ENCODE measurements at regions of chr6 and their contacts with region 1.

Region 1: GRCh38 chr6:166419286-166419685 is 36.5 kb upstream of the MPC1 start:
- DNase-seq: no peak
- H3K4me3 ChIP-seq: no peak overlapping the region
- H3K27ac ChIP-seq: no peak overlapping the region
- H3K4me1 ChIP-seq: no peaks in the 10 kb centered on the region
- H3K27me3 ChIP-seq: no peaks in the 10 kb centered on the region
- CTCF ChIP-seq: no peak
- POLR2A ChIP-seq: no peak

Region 2: GRCh38 chr6:165676435-165677068 is 742.7 kb before region 1 on chr6:
- intact Hi-C with region 1: loop called (anchors 10 kb)
- DNase-seq: no peak
- H3K4me3 ChIP-seq: no peak overlapping the region
- H3K27ac ChIP-seq: no peak overlapping the region
- H3K4me1 ChIP-seq: no peaks in the 10 kb centered on the region
- H3K27me3 ChIP-seq: peaks cover 0 to 6% of the 10 kb centered on the region in 2 donors
- CTCF ChIP-seq: no peak
- POLR2A ChIP-seq: no peak

Region 3: GRCh38 chr6:166379800-166380199 is 39.5 kb before region 1 on chr6:
- intact Hi-C with region 1: no loop called
- DNase-seq: no peak
- H3K4me3 ChIP-seq: no peak overlapping the region
- H3K27ac ChIP-seq: no peak overlapping the region
- H3K4me1 ChIP-seq: no peaks in the 10 kb centered on the region
- H3K27me3 ChIP-seq: no peaks in the 10 kb centered on the region
- CTCF ChIP-seq: no peak
- POLR2A ChIP-seq: no peak

Region 4: DNA sequence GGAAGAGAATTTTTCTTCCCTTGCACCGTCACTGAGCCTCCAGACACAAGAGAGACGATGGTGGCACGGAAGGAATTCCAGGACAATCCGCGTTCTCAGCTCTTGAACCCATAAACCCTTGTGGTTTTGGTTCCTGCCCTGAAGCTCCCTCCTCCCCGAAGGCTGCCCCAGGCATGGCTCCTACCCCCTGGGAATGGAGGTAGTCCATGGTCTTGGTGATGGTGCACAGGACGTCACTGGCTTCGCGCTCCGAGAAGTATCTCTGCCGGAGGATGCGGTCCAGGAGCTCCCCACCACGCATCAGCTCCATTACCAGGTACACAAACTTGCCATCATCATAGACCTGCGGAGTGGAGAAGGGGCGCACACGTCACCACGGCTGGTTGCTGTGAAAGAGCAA is 11.0 kb after region 1 on chr6:
- intact Hi-C with region 1: no loop called
- DNase-seq: no peak
- H3K4me3 ChIP-seq: no peak overlapping the region
- H3K27ac ChIP-seq: no peak overlapping the region
- H3K4me1 ChIP-seq: no peaks in the 10 kb centered on the region
- H3K27me3 ChIP-seq: no peaks in the 10 kb centered on the region
- CTCF ChIP-seq: no peak
- POLR2A ChIP-seq: no peak

Region 5: GRCh38 chr6:167872538-167873210 is 1453.4 kb after region 1 on chr6:
- intact Hi-C with region 1: no loop called
- DNase-seq: no peak
- H3K4me3 ChIP-seq: no peak overlapping the region
- H3K27ac ChIP-seq: no peak overlapping the region
- H3K4me1 ChIP-seq: no peaks in the 10 kb centered on the region
- H3K27me3 ChIP-seq: no peaks in the 10 kb centered on the region
- CTCF ChIP-seq: no peak
- POLR2A ChIP-seq: no peak

Measured in breast epithelium (tissue), 4 donors.